A549 (cell line): ENCODE measurements at regions of chr9 and their contacts with region 1.

Region 1: GRCh38 chr9:12784461-12785259 is 9.8 kb downstream of the LURAP1L start:
- DNase-seq: peak; percentile 44 to 98
- ATAC-seq: peak; percentile 92 to 94
- H3K4me3 ChIP-seq: peak overlapping the region; percentile 32
- H3K27ac ChIP-seq: peak overlapping the region; percentile 95 to 99
- H3K4me1 ChIP-seq: peaks cover 70% of the 10 kb centered on the region
- CTCF ChIP-seq: no peak
- EP300 ChIP-seq: peak; percentile 97
- POLR2A ChIP-seq: no peak
- RAD21 ChIP-seq: peak in 1 of 2 experiments; percentile 65; a peak in 3 of 5 replicates

Region 2: GRCh38 chr9:12813960-12814876 is 29.6 kb after region 1 on chr9:
- CTCF ChIA-PET with region 1: interaction called, 98 read pairs
- POLR2A ChIA-PET with region 1: interaction called, 38 read pairs
- DNase-seq: peak; percentile 71 to 96
- ATAC-seq: peak; percentile 79 to 82
- H3K4me3 ChIP-seq: peak overlapping the region; percentile 21; the same call in 2 of the 3 replicates
- H3K27ac ChIP-seq: peak overlapping the region; percentile 93 to 94
- H3K4me1 ChIP-seq: peaks cover 77% of the 10 kb centered on the region
- CTCF ChIP-seq: peak; percentile 6; the same call in 1 of the 3 replicates
- EP300 ChIP-seq: peak; percentile 98 to 99; a peak in 4 of 5 replicates
- POLR2A ChIP-seq: no peak
- RAD21 ChIP-seq: peak; percentile 14 to 59

Region 3: DNA sequence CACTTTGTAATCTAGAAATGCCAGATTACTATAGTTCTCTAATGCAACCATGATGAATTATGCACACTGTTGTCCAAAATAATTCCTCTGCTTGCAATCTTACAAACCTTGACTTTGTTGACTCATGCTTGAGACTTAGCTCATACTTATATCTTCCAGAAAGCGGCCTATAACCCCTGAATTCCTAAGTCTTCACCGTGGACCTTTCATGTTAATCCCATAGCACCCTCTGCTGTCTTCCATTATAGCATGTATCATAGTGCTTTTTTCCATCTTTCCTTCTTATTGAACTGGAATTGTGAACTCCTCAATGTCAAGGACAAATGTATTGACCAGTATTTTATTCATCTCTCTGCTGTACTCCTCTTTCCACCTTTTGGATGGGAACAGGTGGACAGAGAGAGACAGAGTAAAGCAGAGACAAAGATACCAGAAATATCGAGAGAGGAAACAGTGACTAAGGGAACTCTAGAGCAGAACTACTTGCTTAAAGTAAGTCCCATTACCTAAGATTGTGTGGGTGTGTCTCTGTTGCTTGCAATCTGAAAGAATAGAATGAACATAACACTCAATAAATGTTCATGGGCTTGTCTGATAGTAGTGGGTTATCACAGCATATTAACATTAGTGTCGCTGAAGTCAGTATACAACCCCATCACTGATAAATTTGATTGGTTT is 100.2 kb after region 1 on chr9:
- CTCF ChIA-PET with region 1: interaction called, 14 read pairs
- POLR2A ChIA-PET with region 1: no interaction called
- DNase-seq: peak; percentile 32 to 86
- ATAC-seq: peak; percentile 97 to 99
- H3K4me3 ChIP-seq: no peak overlapping the region
- H3K27ac ChIP-seq: peak overlapping the region; percentile 31 to 59; a peak in 4 of 6 replicates
- H3K4me1 ChIP-seq: peaks cover 33% of the 10 kb centered on the region; the same call in 2 of the 3 replicates
- CTCF ChIP-seq: peak; percentile 89
- EP300 ChIP-seq: no peak
- POLR2A ChIP-seq: no peak
- RAD21 ChIP-seq: peak; percentile 98 to 99